IMR-90 (cell line): ENCODE measurements at regions of chr10 and their contacts with region 1.

Region 1: GRCh38 chr10:91298224-91298871 is 77.9 kb downstream of the PCGF5 start:
- DNase-seq: peak; percentile 81
- ATAC-seq: peak; percentile 91
- H3K4me3 ChIP-seq: peak overlapping the region; percentile 38
- H3K27ac ChIP-seq: peak overlapping the region; percentile 44
- H3K4me1 ChIP-seq: peaks cover 7% of the 10 kb centered on the region
- H3K27me3 ChIP-seq: no peaks in the 10 kb centered on the region
- CTCF ChIP-seq: peak; percentile 97
- POLR2A ChIP-seq: 0 out of 2 replicates have a peak, but pooled peaks have one; percentile 53
- RAD21 ChIP-seq: peak; percentile 97

Region 2: DNA sequence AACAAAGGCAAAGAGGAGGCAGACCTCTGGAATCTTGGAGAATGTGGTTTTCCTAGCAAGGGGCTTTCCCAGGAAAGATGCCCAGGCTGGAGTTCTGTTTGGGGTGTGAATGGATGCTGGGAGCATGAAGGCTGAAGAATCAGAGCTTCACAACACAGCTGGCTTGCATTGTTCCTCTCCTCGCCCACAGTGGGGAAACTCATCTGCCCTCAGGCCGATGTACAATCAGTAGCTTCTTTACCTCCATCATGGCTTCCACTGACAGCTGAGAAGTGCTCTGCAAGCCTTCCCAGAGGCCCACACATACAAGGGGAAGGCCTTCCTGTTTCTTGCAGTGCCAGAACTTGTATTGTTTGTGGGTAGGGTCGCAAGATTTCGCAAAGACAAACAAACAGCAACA is 21.0 kb after region 1 on chr10:
- CTCF ChIA-PET with region 1: no interaction called
- POLR2A ChIA-PET with region 1: no interaction called
- dilution Hi-C with region 1: no loop called
- in situ Hi-C with region 1: no loop called
- intact Hi-C with region 1: no loop called
- DNase-seq: no peak
- ATAC-seq: no peak
- H3K4me3 ChIP-seq: no peak overlapping the region
- H3K27ac ChIP-seq: no peak overlapping the region
- H3K4me1 ChIP-seq: peaks cover 4% of the 10 kb centered on the region
- H3K27me3 ChIP-seq: no peaks in the 10 kb centered on the region
- CTCF ChIP-seq: no peak
- POLR2A ChIP-seq: no peak
- RAD21 ChIP-seq: no peak

Region 3: GRCh38 chr10:91347529-91347928 is 49.2 kb after region 1 on chr10:
- CTCF ChIA-PET with region 1: interaction called, 10 read pairs
- POLR2A ChIA-PET with region 1: no interaction called
- dilution Hi-C with region 1: no loop called
- in situ Hi-C with region 1: no loop called
- intact Hi-C with region 1: no loop called
- DNase-seq: peak; percentile 25
- ATAC-seq: no peak
- H3K4me3 ChIP-seq: no peak overlapping the region
- H3K27ac ChIP-seq: no peak overlapping the region
- H3K4me1 ChIP-seq: peaks cover 18% of the 10 kb centered on the region
- H3K27me3 ChIP-seq: no peaks in the 10 kb centered on the region
- CTCF ChIP-seq: no peak
- POLR2A ChIP-seq: no peak
- RAD21 ChIP-seq: no peak

Region 4: GRCh38 chr10:91389636-91390512 is 91.5 kb after region 1 on chr10:
- CTCF ChIA-PET with region 1: interaction called, 5 read pairs
- POLR2A ChIA-PET with region 1: no interaction called
- dilution Hi-C with region 1: no loop called
- in situ Hi-C with region 1: loop called (anchors 5 kb)
- intact Hi-C with region 1: no loop called
- DNase-seq: peak; percentile 71
- ATAC-seq: peak; percentile 79
- H3K4me3 ChIP-seq: peak overlapping the region; percentile 37; the same call in 1 of the 2 replicates
- H3K27ac ChIP-seq: peak overlapping the region; percentile 37; the same call in 1 of the 2 replicates
- H3K4me1 ChIP-seq: peaks cover 3% of the 10 kb centered on the region; the same call in 1 of the 2 replicates
- H3K27me3 ChIP-seq: peaks cover 21% of the 10 kb centered on the region
- CTCF ChIP-seq: peak; percentile 64
- POLR2A ChIP-seq: no peak
- RAD21 ChIP-seq: peak; percentile 65

Region 5: DNA sequence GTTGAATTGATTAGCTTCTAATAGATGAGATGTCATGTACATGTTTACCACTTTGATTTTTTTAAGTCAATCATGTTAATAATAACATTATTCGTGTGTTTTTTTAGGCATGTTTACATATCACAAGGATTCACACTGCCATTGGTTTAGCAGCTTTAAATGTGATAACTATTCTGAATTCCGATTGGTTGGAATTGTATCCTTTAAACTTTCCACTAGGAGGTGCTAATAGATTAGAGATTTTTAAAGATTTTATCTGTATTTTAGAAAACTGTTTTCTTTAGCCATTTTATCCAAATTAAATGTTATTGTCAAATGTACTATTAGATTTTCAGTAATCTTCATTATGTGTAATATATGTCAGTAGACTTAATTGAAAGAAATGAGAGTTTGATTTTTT is 195.0 kb after region 1 on chr10:
- CTCF ChIA-PET with region 1: interaction called, 3 read pairs
- POLR2A ChIA-PET with region 1: no interaction called
- dilution Hi-C with region 1: no loop called
- in situ Hi-C with region 1: no loop called
- intact Hi-C with region 1: loop called (anchors 10 kb)
- DNase-seq: peak; percentile 63
- ATAC-seq: no peak
- H3K4me3 ChIP-seq: no peak overlapping the region
- H3K27ac ChIP-seq: no peak overlapping the region
- H3K4me1 ChIP-seq: peaks cover 3% of the 10 kb centered on the region; the same call in 1 of the 2 replicates
- H3K27me3 ChIP-seq: no peaks in the 10 kb centered on the region
- CTCF ChIP-seq: peak; percentile 57
- POLR2A ChIP-seq: no peak
- RAD21 ChIP-seq: peak; percentile 54

Region 6: DNA sequence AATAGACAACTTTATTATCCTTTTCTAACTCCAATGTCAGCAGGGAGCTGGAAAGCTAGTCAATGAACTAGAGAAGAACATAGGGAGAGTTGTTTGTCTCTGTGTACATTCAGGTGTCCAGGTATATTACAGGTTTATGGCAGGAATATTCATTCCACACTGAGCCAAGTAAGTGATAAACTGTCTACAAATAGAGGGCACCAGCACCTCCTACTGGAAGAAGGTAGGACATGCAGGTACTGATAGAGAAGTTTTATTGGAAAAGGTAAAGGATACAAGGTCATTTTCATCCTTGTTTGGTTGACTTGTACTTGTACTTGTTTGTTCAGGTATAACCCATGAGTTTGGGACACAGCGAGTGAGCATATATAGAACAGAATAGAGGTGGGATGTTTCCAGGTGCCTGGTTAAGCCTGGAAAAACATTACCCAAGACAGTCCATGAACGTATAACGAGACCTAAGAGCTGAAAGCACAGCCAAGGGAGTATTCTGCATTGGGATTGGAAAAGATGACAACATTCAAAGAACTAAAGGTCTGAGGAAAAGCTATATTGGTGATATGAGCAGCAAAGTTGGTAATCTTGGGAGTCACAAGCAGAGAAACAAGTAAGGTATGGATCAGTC is 395.9 kb after region 1 on chr10:
- CTCF ChIA-PET with region 1: no interaction called
- POLR2A ChIA-PET with region 1: no interaction called
- dilution Hi-C with region 1: no loop called
- in situ Hi-C with region 1: no loop called
- intact Hi-C with region 1: loop called (anchors 1 kb)
- DNase-seq: peak; percentile 51
- ATAC-seq: peak; percentile 81
- H3K4me3 ChIP-seq: no peak overlapping the region
- H3K27ac ChIP-seq: no peak overlapping the region
- H3K4me1 ChIP-seq: peaks cover 8% of the 10 kb centered on the region
- H3K27me3 ChIP-seq: no peaks in the 10 kb centered on the region
- CTCF ChIP-seq: peak; percentile 82
- POLR2A ChIP-seq: no peak
- RAD21 ChIP-seq: peak; percentile 86

Region 7: DNA sequence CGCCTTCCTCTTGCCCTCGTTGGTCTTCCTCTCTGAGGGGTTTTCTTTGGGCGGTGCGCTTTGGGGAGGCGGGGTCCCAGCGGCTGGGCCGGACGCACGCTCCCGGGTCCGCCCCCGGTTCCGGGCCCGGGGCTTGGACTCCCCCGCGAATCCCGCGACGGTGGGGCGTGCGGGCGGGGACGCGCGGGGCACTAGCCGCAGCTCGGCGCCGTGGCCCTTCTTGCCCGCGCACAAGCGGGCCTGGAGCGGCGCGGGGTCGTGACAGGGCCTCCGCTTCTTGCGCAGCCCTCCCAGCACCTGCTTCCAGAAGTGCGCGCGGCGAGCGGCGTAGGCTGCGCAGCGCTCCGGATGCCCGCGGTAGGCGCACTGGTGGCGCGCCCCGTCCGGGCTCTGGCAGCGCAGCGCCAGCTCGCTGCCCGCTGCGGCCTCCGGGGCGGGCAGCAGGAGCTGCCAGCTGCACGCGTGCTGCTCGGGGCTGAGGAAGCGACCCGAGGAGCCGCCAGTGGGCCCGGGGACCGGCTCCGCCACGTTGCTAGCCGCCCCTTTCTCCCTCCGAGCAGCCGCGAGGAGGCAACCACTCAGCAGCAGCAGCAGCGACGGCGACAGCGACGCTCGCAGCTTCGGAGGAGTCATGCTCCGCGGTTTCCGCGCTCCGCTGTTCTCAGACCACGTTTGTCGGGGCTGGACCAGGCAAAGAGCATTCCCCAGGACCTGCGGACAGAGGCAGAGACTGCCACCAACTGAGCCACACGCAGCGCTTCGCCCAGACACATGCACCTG is 610.2 kb after region 1 on chr10:
- CTCF ChIA-PET with region 1: interaction called, 3 read pairs
- POLR2A ChIA-PET with region 1: no interaction called
- dilution Hi-C with region 1: no loop called
- in situ Hi-C with region 1: loop called (anchors 10 kb)
- intact Hi-C with region 1: loop called (anchors 1 kb)
- DNase-seq: peak; percentile 67
- ATAC-seq: peak; percentile 91
- H3K4me3 ChIP-seq: peak overlapping the region; percentile 72
- H3K27ac ChIP-seq: peak overlapping the region; percentile 24; the same call in 1 of the 2 replicates
- H3K4me1 ChIP-seq: no peaks in the 10 kb centered on the region
- H3K27me3 ChIP-seq: no peaks in the 10 kb centered on the region
- CTCF ChIP-seq: peak; percentile 38
- POLR2A ChIP-seq: no peak
- RAD21 ChIP-seq: no peak; the same call in 1 of the 2 replicates